ENCODE measurements at regions of chr10 and their contacts with region 1.

Region 1: DNA sequence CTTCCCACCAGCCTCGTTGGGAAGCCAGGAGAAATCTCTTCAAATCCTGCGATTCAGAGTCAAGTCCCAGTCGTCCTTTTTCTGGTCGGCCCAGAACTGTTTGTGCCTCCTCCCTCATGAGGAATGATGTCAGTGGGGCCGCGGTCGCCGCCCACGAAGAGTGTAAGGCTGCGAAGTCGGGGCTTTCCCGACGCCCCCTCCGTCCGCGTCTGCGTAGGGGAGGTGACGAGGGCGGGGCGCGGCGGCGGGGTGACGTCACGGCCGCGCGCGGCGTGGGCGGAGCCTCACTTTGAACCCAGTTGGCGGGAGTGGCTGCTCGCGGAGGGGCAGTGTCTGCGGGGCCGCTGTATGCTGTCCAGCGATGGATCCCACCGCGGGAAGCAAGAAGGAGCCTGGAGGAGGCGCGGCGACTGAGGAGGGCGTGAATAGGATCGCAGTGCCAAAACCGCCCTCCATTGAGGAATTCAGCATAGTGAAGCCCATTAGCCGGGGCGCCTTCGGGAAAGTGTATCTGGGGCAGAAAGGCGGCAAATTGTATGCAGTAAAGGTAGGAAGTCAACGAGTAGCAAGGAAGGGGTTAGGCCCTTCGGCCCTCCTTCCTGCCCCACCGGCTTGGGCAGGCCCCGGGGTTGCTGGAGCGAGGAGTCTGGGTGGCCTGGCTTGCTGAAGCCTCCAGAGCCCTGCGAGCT is at the start of gene MASTL:
- DNase-seq: peak; percentile 71 to 90
- H3K4me3 ChIP-seq: peak within 1 kb of the TSS; percentile 91
- H3K27ac ChIP-seq: peak within 1 kb of the TSS; percentile 97
- H3K4me1 ChIP-seq: peaks cover 18% of the 10 kb centered on the region
- H3K27me3 ChIP-seq: no peaks in the 10 kb centered on the region
- CTCF ChIP-seq: no peak
- total RNA-seq, gene MASTL: 13.0 and 17.4 TPM in 2 replicates

Region 2: DNA sequence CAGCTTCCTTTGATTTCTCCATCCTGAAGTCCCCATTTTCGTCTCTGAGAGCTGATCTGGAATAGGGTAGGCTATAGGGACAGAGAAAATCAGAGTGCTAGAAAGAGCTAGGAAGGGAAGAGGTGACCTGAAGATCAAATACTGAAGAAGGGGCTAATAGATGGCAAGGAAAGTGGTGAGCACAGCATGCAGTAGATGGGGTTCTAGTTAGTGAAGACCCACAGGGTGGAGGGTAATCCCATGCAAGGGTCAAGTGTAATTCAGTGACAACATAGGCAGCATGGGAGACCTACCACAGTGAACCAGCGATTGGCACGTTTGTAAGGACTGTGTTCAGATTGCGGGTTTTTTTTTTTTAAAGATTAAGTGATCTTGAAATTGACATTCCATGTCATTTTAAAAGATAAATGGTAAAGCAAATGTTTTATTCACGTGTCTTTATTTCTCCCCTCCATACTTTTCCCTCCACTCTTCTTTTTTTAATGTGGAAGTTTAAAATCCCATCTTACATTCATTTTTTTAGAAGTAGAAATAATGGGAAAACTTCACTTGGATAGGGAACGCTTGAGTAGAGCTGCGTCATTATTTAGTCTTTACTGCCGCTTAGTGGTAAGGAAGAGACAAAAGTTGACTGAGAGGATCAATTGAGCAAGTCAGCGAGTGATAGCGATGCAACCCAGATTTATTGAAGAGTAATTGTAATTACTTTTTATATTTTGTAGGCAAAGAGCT is 273.4 kb before region 1 on chr10:
- CTCF ChIA-PET with region 1: no interaction called
- POLR2A ChIA-PET with region 1: no interaction called
- intact Hi-C with region 1: no loop called
- DNase-seq: peak in 1 of 2 experiments; percentile 53
- H3K4me3 ChIP-seq: no peak overlapping the region
- H3K27ac ChIP-seq: no peak overlapping the region
- H3K4me1 ChIP-seq: no peaks in the 10 kb centered on the region
- H3K27me3 ChIP-seq: no peaks in the 10 kb centered on the region
- CTCF ChIP-seq: peak; percentile 67

Region 3: GRCh38 chr10:27207350-27207749 is 52.1 kb after region 1 on chr10:
- CTCF ChIA-PET with region 1: no interaction called
- POLR2A ChIA-PET with region 1: no interaction called
- intact Hi-C with region 1: no loop called
- DNase-seq: no peak
- H3K4me3 ChIP-seq: no peak overlapping the region
- H3K27ac ChIP-seq: no peak overlapping the region
- H3K4me1 ChIP-seq: no peaks in the 10 kb centered on the region
- H3K27me3 ChIP-seq: no peaks in the 10 kb centered on the region
- CTCF ChIP-seq: no peak

Region 4: GRCh38 chr10:27383595-27384542 is 228.7 kb after region 1 on chr10:
- CTCF ChIA-PET with region 1: no interaction called
- POLR2A ChIA-PET with region 1: no interaction called
- intact Hi-C with region 1: no loop called
- DNase-seq: peak in 1 of 2 experiments; percentile 67
- H3K4me3 ChIP-seq: no peak overlapping the region
- H3K27ac ChIP-seq: no peak overlapping the region
- H3K4me1 ChIP-seq: no peaks in the 10 kb centered on the region
- H3K27me3 ChIP-seq: peaks cover 13% of the 10 kb centered on the region; the same call in 1 of the 2 replicates
- CTCF ChIP-seq: no peak

Region 5: DNA sequence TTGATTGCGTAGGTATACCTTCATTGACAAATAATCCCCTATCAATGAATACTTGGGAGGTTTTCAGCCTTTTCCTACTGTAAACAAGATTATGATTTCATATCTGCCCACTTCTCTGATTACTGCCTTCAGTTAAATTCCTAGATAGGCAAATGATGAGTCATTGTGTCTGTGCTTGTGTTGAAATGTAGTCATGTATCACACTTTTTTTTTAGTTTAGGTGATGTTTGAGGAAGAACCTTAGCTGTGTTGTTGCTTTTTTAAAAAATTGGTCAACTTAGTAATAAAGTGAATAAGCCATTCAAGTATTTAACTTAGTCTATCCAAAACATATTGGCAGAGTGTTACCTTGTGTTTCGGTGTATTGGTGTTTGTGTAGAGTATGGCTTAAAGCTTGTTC is 1437.7 kb after region 1 on chr10:
- CTCF ChIA-PET with region 1: no interaction called
- POLR2A ChIA-PET with region 1: interaction called, 10 read pairs
- intact Hi-C with region 1: no loop called
- DNase-seq: peak in 1 of 2 experiments; percentile 74
- H3K4me3 ChIP-seq: no peak overlapping the region
- H3K27ac ChIP-seq: peak overlapping the region; percentile 51
- H3K4me1 ChIP-seq: peaks cover 13% of the 10 kb centered on the region
- H3K27me3 ChIP-seq: no peaks in the 10 kb centered on the region
- CTCF ChIP-seq: no peak